ENCODE measurements at regions of chr12 and their contacts with region 1.

Region 1: GRCh38 chr12:114030451-114030850 is 64.3 kb upstream of the RBM19 start:
- DNase-seq: no peak
- H3K4me3 Mint-ChIP-seq: no peak overlapping the region
- H3K27ac Mint-ChIP-seq: no peak overlapping the region
- H3K4me1 Mint-ChIP-seq: no peaks in the 10 kb centered on the region
- H3K27me3 Mint-ChIP-seq: no peaks in the 10 kb centered on the region

Region 2: DNA sequence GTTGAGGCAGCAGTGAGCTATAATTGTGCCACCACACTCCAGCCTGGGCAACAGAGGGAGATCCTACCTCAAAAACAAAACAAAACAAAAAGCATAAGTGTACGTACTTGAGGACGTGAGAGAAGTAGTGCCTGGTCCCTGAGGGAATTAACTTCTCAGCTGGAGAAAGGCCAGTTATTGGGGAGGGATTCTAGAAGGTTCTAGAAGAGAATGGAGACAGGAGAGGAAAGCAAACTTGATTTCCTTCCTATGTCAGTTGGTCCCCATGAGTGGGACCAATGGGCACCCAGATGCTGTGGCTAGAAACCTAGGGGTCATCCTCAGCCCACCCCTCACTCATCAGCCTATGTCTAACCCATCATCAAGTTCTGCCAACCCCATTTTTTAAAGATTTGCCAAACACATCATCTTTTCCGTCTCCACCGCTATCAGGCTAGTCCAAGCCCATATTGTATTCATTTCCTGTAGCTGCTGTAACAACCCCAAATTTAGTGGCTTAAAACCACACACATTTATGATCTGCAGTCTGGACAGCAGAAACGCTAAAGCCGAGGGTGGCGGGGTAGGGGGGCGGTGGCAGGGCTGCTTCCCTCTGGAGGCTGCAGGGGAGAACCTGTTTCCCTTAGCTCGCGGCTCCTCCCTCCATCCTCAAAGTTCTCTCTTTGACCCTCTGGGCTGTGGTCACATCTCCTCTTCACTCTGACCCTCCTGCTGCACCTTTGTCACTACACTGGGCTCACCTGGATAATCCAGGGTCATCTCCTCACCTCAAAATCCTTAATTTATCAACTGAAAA is 57.1 kb before region 1 on chr12:
- intact Hi-C with region 1: no loop called
- DNase-seq: no peak
- H3K4me3 Mint-ChIP-seq: no peak overlapping the region
- H3K27ac Mint-ChIP-seq: no peak overlapping the region
- H3K4me1 Mint-ChIP-seq: no peaks in the 10 kb centered on the region
- H3K27me3 Mint-ChIP-seq: peaks cover 17% of the 10 kb centered on the region

Region 3: GRCh38 chr12:113991224-113992044 is 39.0 kb before region 1 on chr12:
- intact Hi-C with region 1: loop called (anchors 1 kb)
- DNase-seq: no peak
- H3K4me3 Mint-ChIP-seq: no peak overlapping the region
- H3K27ac Mint-ChIP-seq: no peak overlapping the region
- H3K4me1 Mint-ChIP-seq: no peaks in the 10 kb centered on the region
- H3K27me3 Mint-ChIP-seq: peaks cover 9% of the 10 kb centered on the region

Region 4: DNA sequence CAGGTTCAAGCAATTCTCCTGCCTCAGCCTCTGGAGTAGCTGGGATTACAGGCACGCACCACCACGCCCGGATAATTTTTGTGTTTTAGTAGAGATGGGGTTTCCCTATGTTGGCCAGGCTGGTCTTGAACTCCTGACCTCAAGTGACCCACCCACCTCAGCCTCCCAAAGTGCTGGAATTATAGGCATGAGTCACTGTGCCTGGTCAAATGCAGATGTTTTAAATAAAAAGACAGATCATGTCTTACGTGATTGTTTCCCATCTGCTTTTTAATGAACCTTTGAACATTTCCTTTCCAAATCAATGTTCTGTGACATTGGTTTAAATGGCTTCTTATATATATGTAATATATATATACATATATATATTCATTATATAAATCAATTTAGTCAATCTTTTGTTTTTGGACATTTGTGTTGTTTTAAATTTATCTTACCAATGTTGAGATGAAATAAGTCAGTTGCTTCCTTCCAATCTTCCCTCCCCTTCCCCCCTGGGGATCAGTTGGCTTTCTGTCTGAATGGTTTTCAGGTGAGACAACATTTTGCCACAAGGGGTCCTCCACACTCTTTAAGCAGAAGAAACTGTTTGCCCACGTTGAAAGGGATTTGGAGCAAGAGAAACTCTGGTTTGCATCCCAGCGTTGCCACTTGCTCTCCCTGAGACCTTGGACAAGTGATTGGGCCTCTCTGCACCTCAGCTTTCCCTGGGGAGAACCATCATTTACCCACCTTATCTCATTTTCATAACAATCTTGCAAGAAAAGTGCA is 16.7 kb before region 1 on chr12:
- intact Hi-C with region 1: no loop called
- DNase-seq: no peak
- H3K4me3 Mint-ChIP-seq: no peak overlapping the region
- H3K27ac Mint-ChIP-seq: no peak overlapping the region
- H3K4me1 Mint-ChIP-seq: no peaks in the 10 kb centered on the region
- H3K27me3 Mint-ChIP-seq: peaks cover 5% of the 10 kb centered on the region

Region 5: GRCh38 chr12:114063435-114063834 is 33.0 kb after region 1 on chr12:
- intact Hi-C with region 1: no loop called
- DNase-seq: no peak
- H3K4me3 Mint-ChIP-seq: no peak overlapping the region
- H3K27ac Mint-ChIP-seq: no peak overlapping the region
- H3K4me1 Mint-ChIP-seq: no peaks in the 10 kb centered on the region
- H3K27me3 Mint-ChIP-seq: no peaks in the 10 kb centered on the region

Region 6: GRCh38 chr12:114371250-114371649 is 340.8 kb after region 1 on chr12:
- intact Hi-C with region 1: loop called (anchors 10 kb)
- DNase-seq: no peak
- H3K4me3 Mint-ChIP-seq: no peak overlapping the region
- H3K27ac Mint-ChIP-seq: no peak overlapping the region
- H3K4me1 Mint-ChIP-seq: no peaks in the 10 kb centered on the region
- H3K27me3 Mint-ChIP-seq: no peaks in the 10 kb centered on the region

Region 7: GRCh38 chr12:114858383-114859146 is 828.1 kb after region 1 on chr12:
- intact Hi-C with region 1: no loop called
- DNase-seq: no peak
- H3K4me3 Mint-ChIP-seq: no peak overlapping the region
- H3K27ac Mint-ChIP-seq: no peak overlapping the region
- H3K4me1 Mint-ChIP-seq: no peaks in the 10 kb centered on the region
- H3K27me3 Mint-ChIP-seq: no peaks in the 10 kb centered on the region